Activated CD4-positive, alpha-beta T cell treated with anti-CD3 and anti-CD28 coated beads, Interleukin-2, amount 10 ng/mL, durations not matched to agents 7 days and 5 days (primary cell): ENCODE measurements at regions of chr2 and their contacts with region 1.

Region 1: GRCh38 chr2:84925724-84926376 is 20.4 kb downstream of the TMSB10 start:
- DNase-seq: peak; percentile 98
- H3K4me3 Mint-ChIP-seq: peak overlapping the region; percentile 79
- H3K27ac Mint-ChIP-seq: peak overlapping the region; percentile 90
- H3K4me1 Mint-ChIP-seq: peaks cover 53% of the 10 kb centered on the region
- H3K27me3 Mint-ChIP-seq: no peaks in the 10 kb centered on the region

Region 2: DNA sequence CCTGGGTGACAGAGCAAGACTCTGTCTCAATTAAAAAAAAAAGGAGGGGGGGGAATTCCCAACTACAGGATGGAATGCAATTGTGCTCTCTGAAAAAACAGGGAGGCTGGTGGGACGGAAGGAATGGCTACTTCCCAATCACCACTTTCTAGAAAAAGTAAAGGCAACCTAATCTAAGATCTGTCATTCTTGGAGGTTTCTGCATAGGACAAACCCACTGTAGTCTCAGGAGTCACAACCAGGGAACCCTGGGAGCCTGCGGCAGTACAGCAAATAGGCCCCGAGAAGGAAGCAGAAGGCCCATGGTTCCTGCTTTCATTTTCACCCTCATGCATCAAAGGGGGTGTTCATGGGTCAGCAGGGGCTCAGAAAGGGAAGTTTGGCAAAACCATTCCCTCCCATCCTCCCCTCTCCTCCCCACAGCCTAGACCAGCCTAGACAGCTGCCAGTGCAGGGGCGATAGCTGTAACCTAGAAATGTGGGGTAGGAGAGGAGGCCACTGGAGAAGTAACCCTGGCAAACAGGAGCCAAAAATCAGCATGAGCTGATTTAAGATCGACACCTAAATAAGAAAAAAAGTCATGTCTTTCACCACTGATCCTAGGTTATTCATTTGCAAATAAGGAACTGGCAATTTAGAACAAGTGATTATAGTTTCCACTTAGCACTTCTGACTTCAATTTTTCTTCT is 92.9 kb before region 1 on chr2:
- CTCF ChIA-PET with region 1: interaction called, 12 read pairs
- POLR2A ChIA-PET with region 1: no interaction called
- DNase-seq: peak; percentile 43
- H3K4me3 Mint-ChIP-seq: peak overlapping the region; percentile 60
- H3K27ac Mint-ChIP-seq: peak overlapping the region; percentile 95
- H3K4me1 Mint-ChIP-seq: peaks cover 25% of the 10 kb centered on the region
- H3K27me3 Mint-ChIP-seq: no peaks in the 10 kb centered on the region

Region 3: GRCh38 chr2:84861539-84861938 is 64.3 kb before region 1 on chr2:
- CTCF ChIA-PET with region 1: interaction called, 12 read pairs
- POLR2A ChIA-PET with region 1: no interaction called
- DNase-seq: no peak
- H3K4me3 Mint-ChIP-seq: no peak overlapping the region
- H3K27ac Mint-ChIP-seq: peak overlapping the region; percentile 86
- H3K4me1 Mint-ChIP-seq: peaks cover 94% of the 10 kb centered on the region
- H3K27me3 Mint-ChIP-seq: no peaks in the 10 kb centered on the region

Region 4: DNA sequence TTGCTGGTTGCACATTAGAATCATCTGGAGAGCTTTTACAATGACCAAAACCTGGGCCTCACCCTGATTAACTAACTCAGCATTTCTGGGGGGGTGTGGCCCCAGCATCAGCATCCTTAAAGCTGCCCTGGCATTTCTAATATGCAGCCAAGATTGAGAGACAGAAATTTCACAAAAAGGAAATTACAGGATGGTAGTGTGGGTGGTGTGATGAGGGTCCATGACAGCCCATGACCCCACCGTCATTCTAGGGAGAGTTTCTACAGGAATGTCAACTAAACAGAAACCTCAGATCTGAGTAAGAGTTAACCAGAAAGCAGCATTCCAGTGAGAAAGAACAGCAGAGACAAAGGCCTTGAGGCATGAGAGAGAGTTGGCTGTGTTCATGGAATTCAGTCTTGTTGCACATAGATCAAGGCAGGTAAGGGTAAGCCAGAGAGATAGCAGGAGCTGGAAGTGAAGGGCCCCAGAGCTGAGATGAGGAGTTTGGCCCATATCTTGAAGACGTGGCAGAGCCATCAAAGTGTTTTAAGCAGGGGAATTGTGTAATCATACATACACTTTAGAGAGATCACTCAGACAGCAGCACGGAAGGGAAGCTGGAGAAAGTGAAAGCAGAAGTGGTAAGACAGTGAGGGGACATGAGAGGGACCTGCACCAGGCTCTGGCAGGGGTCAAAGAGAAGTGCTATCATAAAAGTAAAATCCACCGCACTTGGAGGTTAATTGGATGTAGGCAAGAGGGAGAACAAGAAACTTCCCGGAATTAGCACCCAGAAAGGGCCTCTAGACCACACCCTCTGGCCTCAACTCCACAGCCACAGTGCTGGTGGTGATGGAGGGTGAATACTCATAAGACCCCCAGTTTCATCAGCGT is 37.2 kb before region 1 on chr2:
- CTCF ChIA-PET with region 1: interaction called, 56 read pairs
- POLR2A ChIA-PET with region 1: no interaction called
- DNase-seq: peak; percentile 76
- H3K4me3 Mint-ChIP-seq: peak overlapping the region; percentile 68
- H3K27ac Mint-ChIP-seq: peak overlapping the region; percentile 96
- H3K4me1 Mint-ChIP-seq: peaks cover 69% of the 10 kb centered on the region
- H3K27me3 Mint-ChIP-seq: no peaks in the 10 kb centered on the region

Region 5: GRCh38 chr2:84912984-84913383 is 12.9 kb before region 1 on chr2:
- CTCF ChIA-PET with region 1: interaction called, 71 read pairs
- POLR2A ChIA-PET with region 1: no interaction called
- DNase-seq: peak; percentile 4
- H3K4me3 Mint-ChIP-seq: no peak overlapping the region
- H3K27ac Mint-ChIP-seq: peak overlapping the region; percentile 60
- H3K4me1 Mint-ChIP-seq: peaks cover 52% of the 10 kb centered on the region
- H3K27me3 Mint-ChIP-seq: no peaks in the 10 kb centered on the region

Region 6: DNA sequence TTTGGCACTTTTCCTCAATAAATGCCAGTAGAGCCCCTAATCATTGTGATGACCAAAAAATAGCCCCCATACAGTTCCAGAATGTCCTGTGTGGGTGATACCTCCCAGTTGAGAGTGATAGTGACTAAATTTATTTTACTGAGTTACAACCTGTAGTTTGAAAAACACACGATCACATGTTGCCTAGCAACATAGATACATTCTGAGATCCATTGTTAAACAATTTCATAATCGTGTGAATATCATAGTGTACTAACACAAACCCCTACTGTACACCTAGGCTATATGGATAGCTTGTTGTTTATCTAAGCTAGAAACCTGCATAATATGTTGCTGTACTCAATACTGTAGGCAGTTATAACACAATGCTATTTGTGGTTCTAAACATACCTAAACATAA is 75.7 kb after region 1 on chr2:
- CTCF ChIA-PET with region 1: interaction called, 18 read pairs
- POLR2A ChIA-PET with region 1: no interaction called
- DNase-seq: no peak
- H3K4me3 Mint-ChIP-seq: no peak overlapping the region
- H3K27ac Mint-ChIP-seq: peak overlapping the region; percentile 33
- H3K4me1 Mint-ChIP-seq: peaks cover 52% of the 10 kb centered on the region
- H3K27me3 Mint-ChIP-seq: no peaks in the 10 kb centered on the region